Cardiac septum (tissue), 1 donor: ENCODE measurements at regions of chr5 and their contacts with region 1.

Region 1: DNA sequence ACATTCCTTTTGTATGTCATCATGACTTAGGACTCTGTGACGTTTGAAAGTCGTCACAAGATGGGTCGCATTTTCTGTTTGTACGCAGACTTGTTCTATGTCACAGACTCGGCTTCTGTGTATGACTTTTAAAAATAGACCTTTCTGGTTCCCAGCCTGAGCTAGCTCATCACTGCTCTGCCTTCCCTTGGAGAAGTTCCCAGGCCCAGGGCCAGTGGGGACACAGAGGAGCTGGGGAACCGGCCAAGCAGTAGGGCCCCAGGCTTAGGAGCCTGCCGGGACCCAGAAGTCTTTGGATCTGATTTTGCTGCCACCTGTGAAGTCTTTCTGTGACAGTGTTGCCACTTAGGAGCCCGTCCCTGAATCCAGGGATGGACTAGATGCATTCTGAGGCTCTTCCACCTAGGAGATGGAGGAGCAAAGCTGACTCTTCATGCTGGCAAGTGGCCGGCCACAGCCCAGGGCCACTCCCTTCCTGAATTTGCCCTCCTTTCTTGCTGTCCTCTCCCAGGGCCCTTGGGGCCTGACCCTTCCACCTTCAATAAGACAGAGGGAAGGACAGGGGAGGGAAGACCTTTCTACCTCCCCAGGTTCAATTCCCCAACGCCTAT is 18.1 kb upstream of the UBE2QL1 start:
- DNase-seq: peak; percentile 83

Region 2: DNA sequence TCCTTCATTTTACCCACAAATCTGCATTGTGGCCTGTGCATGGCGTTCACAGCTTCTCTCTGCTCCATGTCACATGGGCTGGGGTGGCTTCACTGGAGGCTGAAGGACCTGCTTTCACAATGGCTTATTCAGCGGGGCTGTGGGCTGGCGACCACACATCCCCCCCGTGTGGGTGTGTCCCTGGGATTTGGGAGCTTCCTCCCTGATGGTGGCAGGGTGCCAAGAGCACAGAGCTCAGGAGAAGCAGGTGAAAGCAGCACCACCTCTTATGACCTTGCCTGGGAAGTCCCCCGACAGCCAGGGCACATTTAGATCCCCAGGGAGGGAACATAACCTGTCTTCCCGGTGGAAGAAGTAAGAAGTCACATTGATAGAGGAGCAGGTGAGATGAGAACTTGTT is 47.1 kb before region 1 on chr5:
- intact Hi-C with region 1: loop called (anchors 2 kb)
- DNase-seq: no peak

Region 3: GRCh38 chr5:6404129-6404528 is 26.4 kb before region 1 on chr5:
- intact Hi-C with region 1: no loop called
- DNase-seq: no peak

Region 4: DNA sequence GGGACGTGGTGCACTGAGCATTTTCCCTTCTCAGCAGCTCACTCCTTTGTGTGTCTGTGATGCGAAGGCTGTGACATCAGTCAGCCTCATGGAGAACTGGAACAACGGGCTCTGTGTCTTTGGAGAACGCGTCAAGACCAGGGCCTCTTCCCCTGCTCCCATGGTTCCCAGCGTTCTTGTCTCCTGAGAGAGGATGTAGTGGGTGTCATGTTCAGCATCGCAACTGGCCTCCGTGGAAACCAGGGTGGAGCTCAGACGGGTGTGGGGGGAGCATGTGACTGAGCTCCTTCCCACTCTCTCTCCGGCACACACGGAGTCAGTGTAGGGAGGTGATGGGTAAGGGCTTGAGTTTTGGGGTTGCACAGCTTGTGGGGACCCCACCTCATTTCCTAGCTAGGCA is 342.4 kb after region 1 on chr5:
- intact Hi-C with region 1: no loop called
- DNase-seq: no peak